ENCODE measurements at regions of chr2 and their contacts with region 1.

Region 1: GRCh38 chr2:133765658-133766057 is 197.4 kb upstream of the NCKAP5 start:
- ATAC-seq: peak in 4 of 8 experiments; percentile 19 to 96 (median 32)
- H3K4me3 ChIP-seq: no peak overlapping the region
- H3K27ac ChIP-seq: no peak overlapping the region
- H3K4me1 ChIP-seq: no peaks in the 10 kb centered on the region

Region 2: GRCh38 chr2:133674433-133675331 is 91.0 kb before region 1 on chr2:
- in situ Hi-C with region 1: loop called in 1 of 9 experiments (anchors 10 kb)
- ATAC-seq: peak; percentile 78 to 85 (median 81)
- H3K4me3 ChIP-seq: peak overlapping the region in 4 of 5 donors; percentile 2 to 20 (median 14)
- H3K27ac ChIP-seq: peak overlapping the region; percentile 33 to 60
- H3K4me1 ChIP-seq: peaks cover 41% of the 10 kb centered on the region in 2 donors